ENCODE measurements at regions of chr5 and their contacts with region 1.

Region 1: DNA sequence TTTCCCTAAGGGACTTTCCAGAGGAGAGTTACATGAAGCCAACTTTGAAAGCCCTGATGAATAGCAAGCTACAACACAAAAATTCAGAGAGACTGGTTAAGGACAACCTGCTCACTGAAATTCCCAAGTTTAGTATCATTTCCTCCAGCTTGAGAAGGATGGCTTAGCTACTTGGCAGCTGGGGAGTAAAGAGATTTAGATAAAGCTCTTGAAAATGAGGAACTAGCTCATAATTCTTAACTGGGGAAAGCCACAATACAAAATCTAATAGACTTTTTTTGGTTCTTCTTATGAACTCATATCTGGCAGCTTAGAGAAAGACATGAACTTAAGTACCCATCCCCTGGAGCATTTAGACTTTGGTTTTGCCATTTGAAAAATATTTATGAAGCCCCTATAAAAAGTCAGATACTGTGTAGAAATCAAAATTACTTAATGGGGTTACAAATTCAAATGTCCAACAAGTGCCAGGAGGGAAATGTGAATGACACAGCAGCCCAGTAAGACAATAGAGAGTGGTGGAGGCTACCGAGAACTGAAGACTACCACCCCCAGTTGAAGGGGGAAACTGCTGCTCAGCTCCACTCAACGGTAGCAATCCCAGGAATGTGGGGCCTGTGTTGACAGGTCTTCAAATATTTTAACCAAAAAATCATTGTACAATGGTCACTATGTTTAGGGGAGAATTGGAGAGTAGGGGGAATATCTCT is 79.4 kb upstream of the ADRB2 start:
- DNase-seq: no peak
- H3K4me3 ChIP-seq: no peak overlapping the region
- H3K27ac ChIP-seq: no peak overlapping the region
- H3K4me1 ChIP-seq: peaks cover 12% of the 10 kb centered on the region
- H3K27me3 ChIP-seq: no peaks in the 10 kb centered on the region
- CTCF ChIP-seq: no peak

Region 2: GRCh38 chr5:148912714-148913398 is 165.9 kb after region 1 on chr5:
- intact Hi-C with region 1: no loop called
- DNase-seq: no peak
- H3K4me3 ChIP-seq: no peak overlapping the region
- H3K27ac ChIP-seq: no peak overlapping the region
- H3K4me1 ChIP-seq: peaks cover 38% of the 10 kb centered on the region
- H3K27me3 ChIP-seq: no peaks in the 10 kb centered on the region
- CTCF ChIP-seq: peak; percentile 38

Region 3: DNA sequence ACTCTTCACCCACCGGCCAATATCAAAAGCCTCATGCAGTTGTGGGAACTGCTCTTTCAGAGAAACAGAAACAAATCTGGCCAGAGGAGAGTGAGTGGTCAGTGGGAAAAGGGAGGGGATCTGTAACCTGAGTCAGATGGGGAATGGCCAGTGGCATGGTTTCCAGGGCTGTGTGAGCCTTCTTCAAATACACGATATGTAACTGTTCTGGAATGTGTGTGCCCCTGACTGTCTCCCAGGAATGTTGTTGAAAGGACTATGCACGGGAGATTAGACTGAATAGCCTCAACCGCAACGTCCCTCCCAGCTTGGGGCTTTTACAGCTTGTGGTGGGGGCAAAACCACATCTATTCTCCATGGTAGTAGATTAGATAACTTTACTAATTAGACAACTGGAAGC is 255.1 kb after region 1 on chr5:
- intact Hi-C with region 1: loop called (anchors 5 kb)
- DNase-seq: no peak
- H3K4me3 ChIP-seq: no peak overlapping the region
- H3K27ac ChIP-seq: peak overlapping the region; percentile 38
- H3K4me1 ChIP-seq: peaks cover 28% of the 10 kb centered on the region
- H3K27me3 ChIP-seq: no peaks in the 10 kb centered on the region
- CTCF ChIP-seq: no peak

Measured in left ventricle myocardium inferior (tissue), 1 donor.